Activated CD4-positive, alpha-beta T cell treated with anti-CD3 and anti-CD28 coated beads, Interleukin-2, amount 10 ng/mL, durations not matched to agents 24 days and 14 days (primary cell): ENCODE measurements at regions of chr5 and their contacts with region 1.

Region 1: DNA sequence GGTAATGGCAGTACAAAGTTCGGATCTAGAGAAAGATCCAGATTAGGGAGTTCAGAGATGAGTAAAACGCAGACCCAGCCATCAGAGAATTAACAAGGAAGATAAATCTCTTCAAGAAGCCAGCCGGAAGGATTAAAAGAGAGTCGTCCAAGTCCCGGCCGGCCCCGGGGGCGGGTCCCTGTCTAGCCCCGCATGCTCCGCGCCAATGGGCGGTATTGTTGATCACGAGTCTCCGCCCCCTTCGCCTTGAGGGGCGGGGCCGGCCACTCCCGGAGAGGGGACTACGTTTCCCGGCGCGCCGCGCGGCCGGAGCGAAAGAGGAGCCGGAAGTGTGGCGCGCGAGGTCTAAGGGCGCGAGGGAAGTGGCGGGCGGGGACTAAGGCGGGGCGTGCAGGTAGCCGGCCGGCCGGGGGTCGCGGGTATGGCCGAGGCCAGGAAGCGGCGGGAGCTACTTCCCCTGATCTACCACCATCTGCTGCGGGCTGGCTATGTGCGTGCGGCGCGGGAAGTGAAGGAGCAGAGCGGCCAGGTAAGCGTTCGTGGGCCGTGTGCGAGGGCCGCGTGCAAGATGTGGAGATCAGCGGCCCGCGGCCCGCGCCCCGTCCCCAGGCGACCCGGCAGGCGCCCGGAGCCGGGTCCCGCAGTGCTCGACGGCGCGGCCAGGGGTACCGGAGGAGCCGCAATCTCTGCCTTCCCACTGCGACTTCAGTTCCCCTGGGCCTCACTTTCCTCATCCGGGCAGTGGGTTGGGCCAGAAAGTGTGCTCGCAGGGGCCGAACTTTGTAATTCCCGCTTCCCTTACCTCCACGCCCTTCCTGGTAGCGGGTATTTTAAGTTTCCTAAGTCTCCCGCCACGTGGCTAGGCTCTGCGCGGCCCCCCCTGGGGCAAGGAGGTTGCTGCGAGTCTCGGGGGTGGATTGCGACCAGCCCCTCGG is at the start of gene TCOF1:
- DNase-seq: peak; percentile 100
- H3K4me3 Mint-ChIP-seq: peak within 1 kb of the TSS; percentile 92
- H3K27ac Mint-ChIP-seq: peak within 1 kb of the TSS; percentile 93
- H3K4me1 Mint-ChIP-seq: peaks cover 35% of the 10 kb centered on the region
- H3K27me3 Mint-ChIP-seq: peaks cover 12% of the 10 kb centered on the region
- total RNA-seq, gene TCOF1: 130 and 140 TPM in 2 replicates

Region 2: GRCh38 chr5:149345147-149345875 is 1012.3 kb before region 1 on chr5 and contains the start of gene GRPEL2:
- intact Hi-C with region 1: loop called (anchors 5 kb)
- DNase-seq: peak; percentile 97
- H3K4me3 Mint-ChIP-seq: peak within 1 kb of the TSS; percentile 96
- H3K27ac Mint-ChIP-seq: peak within 1 kb of the TSS; percentile 97
- H3K4me1 Mint-ChIP-seq: peaks cover 46% of the 10 kb centered on the region
- H3K27me3 Mint-ChIP-seq: peaks cover 1% of the 10 kb centered on the region
- total RNA-seq, gene GRPEL2: 30.6 and 30.7 TPM in 2 replicates

Region 3: GRCh38 chr5:150161242-150162141 is 196.1 kb before region 1 on chr5:
- intact Hi-C with region 1: loop called (anchors 2 kb)
- DNase-seq: peak; percentile 94
- H3K4me3 Mint-ChIP-seq: no peak overlapping the region
- H3K27ac Mint-ChIP-seq: no peak overlapping the region
- H3K4me1 Mint-ChIP-seq: peaks cover 3% of the 10 kb centered on the region
- H3K27me3 Mint-ChIP-seq: peaks cover 30% of the 10 kb centered on the region

Region 4: DNA sequence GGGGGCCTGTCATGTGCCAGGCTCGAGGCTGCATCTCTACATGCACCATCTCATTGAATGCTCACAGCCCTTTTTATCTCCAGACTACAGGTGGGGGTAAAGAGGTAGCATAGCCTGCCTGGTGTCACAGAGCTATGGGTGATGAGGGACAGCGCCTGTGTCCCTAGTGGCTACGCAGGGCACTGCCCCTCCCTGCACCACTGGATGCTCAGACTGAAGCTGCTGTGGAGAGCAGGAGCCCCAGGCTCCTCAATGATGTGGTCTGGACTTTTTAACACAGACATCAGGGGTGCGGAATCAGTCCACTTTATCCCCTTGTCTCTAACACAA is 70.7 kb before region 1 on chr5:
- intact Hi-C with region 1: no loop called
- DNase-seq: peak; percentile 60
- H3K4me3 Mint-ChIP-seq: no peak overlapping the region
- H3K27ac Mint-ChIP-seq: no peak overlapping the region
- H3K4me1 Mint-ChIP-seq: no peaks in the 10 kb centered on the region
- H3K27me3 Mint-ChIP-seq: peaks cover 3% of the 10 kb centered on the region

Region 5: GRCh38 chr5:150377964-150378694 is 20.5 kb after region 1 on chr5:
- intact Hi-C with region 1: no loop called
- DNase-seq: no peak
- H3K4me3 Mint-ChIP-seq: no peak overlapping the region
- H3K27ac Mint-ChIP-seq: no peak overlapping the region
- H3K4me1 Mint-ChIP-seq: no peaks in the 10 kb centered on the region
- H3K27me3 Mint-ChIP-seq: no peaks in the 10 kb centered on the region

Region 6: GRCh38 chr5:150436141-150436680 is 78.6 kb after region 1 on chr5:
- intact Hi-C with region 1: loop called (anchors 1 kb)
- DNase-seq: peak; percentile 97
- H3K4me3 Mint-ChIP-seq: peak overlapping the region; percentile 56
- H3K27ac Mint-ChIP-seq: peak overlapping the region; percentile 75
- H3K4me1 Mint-ChIP-seq: peaks cover 8% of the 10 kb centered on the region
- H3K27me3 Mint-ChIP-seq: no peaks in the 10 kb centered on the region

Region 7: DNA sequence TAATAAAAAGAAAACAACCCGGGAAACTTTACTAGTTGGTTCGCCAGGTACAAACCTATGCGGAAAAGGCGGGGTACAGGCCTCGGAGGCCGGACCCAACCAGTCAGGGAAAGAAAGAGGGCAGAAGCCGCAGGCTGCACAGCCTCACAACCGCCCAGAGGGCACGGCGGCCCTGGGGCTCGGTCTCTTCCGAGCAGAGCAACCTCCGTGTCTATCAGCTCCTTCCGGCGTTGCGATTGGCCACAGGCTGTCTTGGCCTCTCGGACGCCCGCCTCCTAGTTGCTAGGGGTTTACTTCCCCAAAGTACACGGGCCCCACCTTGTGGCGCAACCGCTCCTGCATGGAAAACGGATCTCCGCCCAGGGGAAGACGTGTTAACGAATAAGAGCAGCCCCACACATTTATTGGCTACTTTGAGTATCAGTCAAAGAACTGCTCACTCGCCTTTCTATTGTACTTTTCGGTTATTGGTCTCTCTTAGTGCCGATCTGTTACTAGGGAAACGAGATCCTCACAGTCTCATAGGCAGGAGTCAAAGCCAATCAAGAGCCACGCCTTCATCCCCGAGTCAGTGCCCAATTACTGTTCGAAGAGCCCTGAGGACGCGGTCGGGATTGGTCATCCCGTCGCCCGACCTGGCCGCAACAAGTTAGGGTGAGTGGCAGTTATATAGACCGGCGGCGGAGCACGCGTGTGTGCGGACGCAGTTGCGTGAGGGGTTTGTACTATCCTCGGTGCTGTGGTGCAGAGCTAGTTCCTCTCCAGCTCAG is 1413.9 kb after region 1 on chr5 and contains the start of gene G3BP1:
- intact Hi-C with region 1: loop called (anchors 2 kb)
- DNase-seq: peak; percentile 100
- H3K4me3 Mint-ChIP-seq: peak within 1 kb of the TSS; percentile 98
- H3K27ac Mint-ChIP-seq: peak within 1 kb of the TSS; percentile 92
- H3K4me1 Mint-ChIP-seq: peaks cover 30% of the 10 kb centered on the region
- H3K27me3 Mint-ChIP-seq: no peaks in the 10 kb centered on the region
- total RNA-seq, gene G3BP1: 362 and 367 TPM in 2 replicates